ENCODE measurements at regions of chr1 and their contacts with region 1.

Region 1: DNA sequence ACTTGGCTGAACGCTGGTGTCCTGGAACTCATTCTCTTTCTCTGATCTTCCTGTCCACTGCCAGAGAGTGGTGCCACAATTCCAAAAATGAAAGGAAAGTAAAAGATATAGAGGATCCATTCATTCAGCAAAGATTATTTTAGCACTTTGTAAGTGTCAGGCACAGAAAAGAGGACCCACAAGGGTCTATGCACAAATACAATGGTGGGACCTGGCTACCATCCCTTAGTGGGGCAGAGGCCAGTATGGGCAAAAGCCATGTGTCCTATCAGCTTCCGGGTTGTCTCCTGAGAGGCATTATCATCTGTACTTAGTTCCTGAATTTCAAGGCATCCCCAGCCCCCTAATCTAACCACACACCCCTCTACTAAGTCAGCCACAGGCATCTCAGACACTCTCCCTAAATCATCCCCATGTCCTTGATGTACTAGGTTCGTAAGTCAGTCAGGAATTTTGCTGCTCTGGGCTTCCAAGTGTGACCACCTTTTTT is 19.0 kb downstream of the SSR2 start:
- DNase-seq: peak; percentile 70

Region 2: GRCh38 chr1:155759966-155760630 is 241.6 kb before region 1 on chr1:
- intact Hi-C with region 1: loop called (anchors 10 kb)
- DNase-seq: no peak

Region 3: GRCh38 chr1:156050416-156050815 is 48.7 kb after region 1 on chr1:
- intact Hi-C with region 1: no loop called
- DNase-seq: peak; percentile 79

Region 4: GRCh38 chr1:156060937-156061636 is 59.4 kb after region 1 on chr1 and contains the start of gene RAB25:
- intact Hi-C with region 1: loop called (anchors 10 kb)
- DNase-seq: no peak
- total RNA-seq, gene RAB25: not detected